PC-3 (cell line): ENCODE measurements at regions of chr5 and their contacts with region 1.

Region 1: GRCh38 chr5:108421713-108422112 is 39.8 kb upstream of the FBXL17 start:
- DNase-seq: peak; percentile 90
- ATAC-seq: peak; percentile 98
- H3K4me3 ChIP-seq: no peak overlapping the region
- H3K27ac ChIP-seq: peak overlapping the region; percentile 35
- H3K4me1 ChIP-seq: peaks cover 19% of the 10 kb centered on the region
- H3K27me3 ChIP-seq: no peaks in the 10 kb centered on the region
- CTCF ChIP-seq: no peak

Region 2: DNA sequence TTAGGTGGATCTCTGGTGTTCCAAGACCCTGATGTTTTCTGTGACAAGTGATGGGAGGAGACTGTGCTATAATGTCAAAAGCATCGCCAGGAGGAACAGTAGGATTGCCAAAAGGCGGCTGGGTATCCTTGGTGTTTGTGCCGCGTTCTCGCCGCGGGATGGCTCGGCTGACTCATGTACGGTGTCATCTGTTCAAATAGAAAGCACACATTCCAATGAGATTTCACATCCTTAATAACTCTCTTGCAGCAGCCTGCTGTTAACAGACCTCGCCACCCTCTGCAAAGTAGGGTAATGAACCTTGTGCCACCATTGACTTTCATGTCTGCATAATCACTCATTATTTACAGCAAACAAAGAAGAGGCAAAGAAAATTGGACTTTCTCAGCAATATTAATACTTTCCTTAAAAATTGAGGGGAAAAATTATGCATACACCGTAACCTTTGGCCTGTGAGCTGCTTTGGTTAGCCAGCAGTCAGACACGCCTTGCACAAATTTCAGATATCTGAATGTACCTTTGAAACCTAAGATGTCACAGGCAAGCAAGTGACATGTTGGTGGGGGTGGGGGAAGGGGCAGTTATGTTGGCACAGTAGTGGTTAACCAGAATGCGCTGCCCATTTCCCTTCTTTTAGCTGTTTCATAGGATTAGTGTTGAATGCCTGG is 1040.4 kb before region 1 on chr5:
- CTCF ChIA-PET with region 1: no interaction called
- POLR2A ChIA-PET with region 1: no interaction called
- intact Hi-C with region 1: no loop called
- DNase-seq: peak; percentile 83
- ATAC-seq: peak; percentile 92
- H3K4me3 ChIP-seq: peak overlapping the region; percentile 26; the same call in 1 of the 2 replicates
- H3K27ac ChIP-seq: peak overlapping the region; percentile 83
- H3K4me1 ChIP-seq: peaks cover 45% of the 10 kb centered on the region
- H3K27me3 ChIP-seq: no peaks in the 10 kb centered on the region
- CTCF ChIP-seq: 0 out of 2 replicates have a peak, but pooled peaks have one; percentile 8

Region 3: DNA sequence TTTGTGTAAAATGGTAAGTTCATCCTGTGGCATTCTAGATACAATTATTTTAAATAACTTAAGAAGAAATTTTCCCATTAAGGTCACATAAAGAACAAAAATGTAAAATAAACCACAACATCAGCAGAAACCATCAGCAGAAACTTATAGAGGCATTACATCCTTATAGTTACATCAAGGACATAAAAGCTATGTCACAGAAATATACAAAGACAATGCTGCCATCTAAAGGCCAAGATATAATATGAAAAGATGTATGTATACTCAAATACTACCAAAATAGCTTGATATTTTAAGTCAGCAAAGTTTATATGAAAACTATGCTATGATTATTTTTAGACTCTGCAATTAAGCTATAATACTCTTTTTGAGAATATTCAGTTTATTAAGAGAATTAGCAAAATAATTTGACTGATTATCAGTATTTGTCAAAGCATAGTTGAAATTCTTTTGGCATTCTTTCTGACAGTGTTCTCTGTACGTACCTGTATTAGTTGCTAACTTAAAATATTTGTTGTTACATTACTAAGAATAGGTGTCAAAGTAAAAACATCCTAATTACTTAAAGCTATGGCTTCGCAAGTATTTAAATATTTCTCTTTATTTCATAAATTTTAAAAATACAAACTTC is 76.1 kb before region 1 on chr5:
- CTCF ChIA-PET with region 1: no interaction called
- POLR2A ChIA-PET with region 1: no interaction called
- intact Hi-C with region 1: no loop called
- DNase-seq: peak; percentile 77
- ATAC-seq: peak; percentile 88
- H3K4me3 ChIP-seq: no peak overlapping the region
- H3K27ac ChIP-seq: no peak overlapping the region
- H3K4me1 ChIP-seq: no peaks in the 10 kb centered on the region
- H3K27me3 ChIP-seq: no peaks in the 10 kb centered on the region
- CTCF ChIP-seq: peak; percentile 87

Region 4: GRCh38 chr5:108432024-108432423 is 10.3 kb after region 1 on chr5:
- CTCF ChIA-PET with region 1: no interaction called
- POLR2A ChIA-PET with region 1: interaction called, 10 read pairs
- intact Hi-C with region 1: no loop called
- DNase-seq: peak; percentile 61
- ATAC-seq: peak; percentile 75
- H3K4me3 ChIP-seq: no peak overlapping the region
- H3K27ac ChIP-seq: no peak overlapping the region
- H3K4me1 ChIP-seq: peaks cover 16% of the 10 kb centered on the region
- H3K27me3 ChIP-seq: no peaks in the 10 kb centered on the region
- CTCF ChIP-seq: no peak